ENCODE measurements at regions of chr9 and their contacts with region 1.

Region 1: DNA sequence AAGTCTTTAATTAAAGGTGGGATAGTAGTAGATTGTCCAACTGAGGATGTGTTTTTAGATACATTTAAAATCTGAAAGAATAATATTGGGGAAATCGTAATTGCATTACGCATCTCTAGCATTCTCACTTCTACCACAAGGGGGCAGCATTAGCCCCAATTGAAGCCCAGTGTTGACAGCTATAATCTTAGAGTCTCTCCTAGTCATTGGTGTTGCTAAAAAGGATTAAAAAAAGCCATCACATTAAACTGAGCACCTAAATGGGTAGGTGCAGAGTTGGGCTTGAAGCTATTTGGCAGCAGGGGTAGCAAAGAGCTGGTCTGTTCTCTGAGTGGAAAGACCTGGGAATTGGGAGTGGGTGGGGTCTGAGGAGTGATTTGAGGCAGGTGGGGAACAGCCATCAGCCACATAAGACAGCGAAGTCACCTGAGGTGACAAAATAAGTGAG is 177.2 kb downstream of the OSTF1 start:
- DNase-seq: peak; percentile 27
- H3K4me3 ChIP-seq: no peak overlapping the region
- H3K27ac ChIP-seq: no peak overlapping the region
- H3K4me1 ChIP-seq: no peaks in the 10 kb centered on the region
- H3K27me3 ChIP-seq: no peaks in the 10 kb centered on the region
- CTCF ChIP-seq: peak; percentile 87

Region 2: DNA sequence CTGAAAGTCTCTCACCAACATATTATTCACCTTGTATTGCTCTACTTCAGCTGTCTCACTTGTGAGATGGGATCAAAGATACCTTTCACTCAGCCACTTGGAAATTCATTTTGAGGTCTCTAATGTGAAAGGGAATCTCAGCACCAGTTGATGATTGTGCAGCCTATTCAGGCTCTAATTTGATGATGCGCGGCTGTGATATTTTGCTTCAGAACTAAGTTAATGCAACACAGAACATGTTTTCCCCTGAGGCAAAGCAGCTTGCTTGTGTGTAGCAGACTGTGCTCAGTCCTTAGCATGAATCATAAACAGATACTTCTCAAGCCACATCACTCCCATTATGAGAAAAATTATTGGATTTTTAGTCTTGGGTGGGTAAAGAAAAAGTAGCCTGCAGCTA is 201.6 kb after region 1 on chr9:
- CTCF ChIA-PET with region 1: no interaction called
- dilution Hi-C with region 1: no loop called
- in situ Hi-C with region 1: no loop called
- intact Hi-C with region 1: no loop called
- DNase-seq: peak; percentile 6
- H3K4me3 ChIP-seq: no peak overlapping the region
- H3K27ac ChIP-seq: no peak overlapping the region
- H3K4me1 ChIP-seq: no peaks in the 10 kb centered on the region
- H3K27me3 ChIP-seq: no peaks in the 10 kb centered on the region
- CTCF ChIP-seq: no peak

Region 3: DNA sequence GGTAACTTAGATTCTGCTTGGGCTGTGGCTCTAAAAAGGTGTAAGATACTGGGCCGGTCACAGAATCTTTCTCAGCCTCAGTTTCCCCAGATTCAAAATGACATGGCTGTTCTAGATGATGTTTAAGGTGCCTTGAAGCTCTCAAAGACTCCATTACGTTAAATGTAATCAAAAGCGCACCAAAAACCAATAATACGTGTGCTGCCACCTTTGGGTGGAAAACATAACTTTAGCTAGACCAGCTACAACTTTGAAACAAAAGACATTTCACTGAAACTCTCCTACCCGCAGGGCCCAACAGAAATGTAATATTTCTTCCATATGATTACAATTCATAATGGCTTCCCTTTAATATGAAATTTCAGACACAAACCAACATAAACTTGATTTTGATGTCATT is 590.0 kb after region 1 on chr9:
- CTCF ChIA-PET with region 1: interaction called, 6 read pairs
- dilution Hi-C with region 1: no loop called
- in situ Hi-C with region 1: loop called in 1 of 2 experiments (anchors 25 kb)
- intact Hi-C with region 1: loop called (anchors 1 kb)
- DNase-seq: peak; percentile 16
- H3K4me3 ChIP-seq: no peak overlapping the region
- H3K27ac ChIP-seq: no peak overlapping the region
- H3K4me1 ChIP-seq: no peaks in the 10 kb centered on the region
- H3K27me3 ChIP-seq: no peaks in the 10 kb centered on the region
- CTCF ChIP-seq: peak; percentile 45 to 48

Region 4: GRCh38 chr9:76297721-76298239 is 1032.2 kb after region 1 on chr9:
- CTCF ChIA-PET with region 1: no interaction called
- dilution Hi-C with region 1: no loop called
- in situ Hi-C with region 1: loop called (anchors 25 kb)
- intact Hi-C with region 1: loop called (anchors 1 kb)
- DNase-seq: no peak
- H3K4me3 ChIP-seq: no peak overlapping the region
- H3K27ac ChIP-seq: no peak overlapping the region
- H3K4me1 ChIP-seq: peaks cover 3% of the 10 kb centered on the region
- H3K27me3 ChIP-seq: no peaks in the 10 kb centered on the region
- CTCF ChIP-seq: no peak

Region 5: GRCh38 chr9:76302947-76303940 is 1037.7 kb after region 1 on chr9:
- CTCF ChIA-PET with region 1: no interaction called
- dilution Hi-C with region 1: no loop called
- in situ Hi-C with region 1: loop called (anchors 25 kb)
- intact Hi-C with region 1: loop called (anchors 1 kb)
- DNase-seq: peak; percentile 26
- H3K4me3 ChIP-seq: no peak overlapping the region
- H3K27ac ChIP-seq: no peak overlapping the region
- H3K4me1 ChIP-seq: no peaks in the 10 kb centered on the region
- H3K27me3 ChIP-seq: no peaks in the 10 kb centered on the region
- CTCF ChIP-seq: peak; percentile 42 to 65

Measured in mammary epithelial cell (primary cell).